HEK293 (cell line): ENCODE measurements at regions of chr11 and their contacts with region 1.

Region 1: GRCh38 chr11:110173811-110174644 is 80.8 kb downstream of the ZC3H12C start:
- H3K4me3 ChIP-seq: no peak overlapping the region
- H3K27ac ChIP-seq: no peak overlapping the region
- H3K4me1 ChIP-seq: no peaks in the 10 kb centered on the region
- CTCF ChIP-seq: peak; percentile 67

Region 2: GRCh38 chr11:110160016-110160415 is 14.0 kb before region 1 on chr11:
- CTCF ChIA-PET with region 1: interaction called, 24 read pairs
- POLR2A ChIA-PET with region 1: no interaction called
- H3K4me3 ChIP-seq: no peak overlapping the region
- H3K27ac ChIP-seq: no peak overlapping the region
- H3K4me1 ChIP-seq: no peaks in the 10 kb centered on the region
- CTCF ChIP-seq: no peak